ENCODE measurements at regions of chr15 and their contacts with region 1.

Region 1: DNA sequence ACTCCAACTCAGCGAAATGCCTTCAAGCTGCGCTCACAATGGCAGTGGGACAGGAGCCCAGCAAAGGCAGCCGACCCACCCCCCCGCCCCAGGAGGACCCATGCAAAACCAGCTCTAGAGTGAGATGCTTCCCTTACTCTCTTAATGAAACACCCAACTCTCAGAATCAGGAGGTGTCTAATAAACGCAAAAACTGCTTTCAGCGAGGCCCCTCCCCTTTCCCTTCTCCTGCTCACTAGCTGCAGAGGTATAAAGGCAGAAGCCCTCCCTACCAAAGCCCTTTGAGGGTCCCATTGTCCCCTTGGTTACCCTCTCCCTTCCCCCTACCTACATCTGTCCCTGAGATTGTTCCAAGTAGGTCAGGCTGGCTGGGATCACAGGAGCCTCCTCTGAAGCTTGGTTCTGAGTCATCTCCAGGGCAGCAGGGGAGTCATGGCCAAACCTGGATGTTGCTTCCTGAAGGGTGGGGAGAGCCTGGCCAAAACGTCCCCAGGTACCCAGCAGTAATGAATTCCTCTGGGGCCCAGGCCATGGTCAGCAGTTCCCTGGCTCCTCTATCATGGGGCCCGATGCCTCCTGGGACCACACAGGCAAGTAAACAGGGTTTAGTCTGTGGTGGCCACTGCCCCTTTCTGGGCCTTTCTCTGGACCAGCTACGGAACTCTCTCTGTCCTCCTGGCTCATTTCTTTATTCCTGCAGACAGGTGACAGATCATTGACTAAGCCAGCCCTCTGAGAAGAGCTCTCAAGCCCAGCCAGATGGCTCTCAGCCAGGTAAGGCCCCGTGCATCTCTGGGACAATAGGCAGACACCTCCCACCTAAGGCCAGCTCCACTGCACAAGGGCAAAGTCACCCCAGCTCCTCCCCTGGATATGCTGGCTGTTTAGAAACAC is 8.6 kb downstream of the KLHL25 start:
- DNase-seq: no peak
- H3K4me3 ChIP-seq: peak overlapping the region; percentile 3 to 22
- H3K27ac ChIP-seq: peak overlapping the region; percentile 51 to 61
- H3K4me1 ChIP-seq: peaks cover 8 to 29% (median 18%) of the 10 kb centered on the region in 4 donors
- H3K27me3 ChIP-seq: no peaks in the 10 kb centered on the region
- CTCF ChIP-seq: no peak

Region 2: DNA sequence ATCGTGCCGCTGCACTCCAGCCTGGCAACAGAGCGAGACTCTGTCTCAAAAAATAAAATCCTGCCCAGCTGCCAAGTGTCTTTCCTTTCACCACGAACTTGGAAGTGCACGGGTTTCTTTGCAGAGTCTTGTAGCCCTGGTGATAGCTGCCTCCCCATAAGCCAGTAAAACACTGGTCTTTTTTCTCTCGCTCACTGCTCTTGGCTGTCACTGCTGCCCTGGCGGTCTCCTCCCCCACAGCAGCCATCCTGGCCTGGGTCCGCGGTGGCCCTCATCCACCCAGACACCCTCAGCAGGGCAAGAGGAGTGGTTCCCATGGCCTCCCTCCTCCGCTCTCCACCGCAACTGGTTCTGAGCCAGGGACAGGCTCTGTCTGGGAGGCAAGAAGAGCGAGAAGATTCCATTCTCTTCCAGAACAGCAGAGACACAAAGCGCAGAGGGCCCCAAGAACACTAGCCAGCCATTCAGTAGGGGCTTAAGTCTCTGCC is 35.8 kb before region 1 on chr15:
- intact Hi-C with region 1: loop called (anchors 5 kb)
- DNase-seq: peak; percentile 66 to 89
- H3K4me3 ChIP-seq: peak overlapping the region; percentile 41 to 46
- H3K27ac ChIP-seq: peak overlapping the region; percentile 73 to 74
- H3K4me1 ChIP-seq: peaks cover 0 to 47% (median 39%) of the 10 kb centered on the region in 4 donors
- H3K27me3 ChIP-seq: no peaks in the 10 kb centered on the region
- CTCF ChIP-seq: peak in 1 of 2 experiments; percentile 17